Activated CD8-positive, alpha-beta T cell treated with anti-CD3 and anti-CD28 coated beads for 36 hours (primary cell): ENCODE measurements at regions of chr17 and their contacts with region 1.

Region 1: GRCh38 chr17:28547623-28548416 is 4.6 kb downstream of the UNC119 start:
- DNase-seq: peak; percentile 82
- ATAC-seq: peak; percentile 57
- H3K4me3 Mint-ChIP-seq: no peak overlapping the region
- H3K27ac Mint-ChIP-seq: peak overlapping the region; percentile 81
- H3K4me1 Mint-ChIP-seq: peaks cover 46% of the 10 kb centered on the region
- H3K27me3 Mint-ChIP-seq: no peaks in the 10 kb centered on the region
- CTCF ChIP-seq: peak; percentile 93

Region 2: GRCh38 chr17:28416703-28417311 is 131.0 kb before region 1 on chr17:
- CTCF ChIA-PET with region 1: interaction called, 14 read pairs
- POLR2A ChIA-PET with region 1: no interaction called
- intact Hi-C with region 1: no loop called
- DNase-seq: peak; percentile 72
- ATAC-seq: peak; percentile 97
- H3K4me3 Mint-ChIP-seq: no peak overlapping the region
- H3K27ac Mint-ChIP-seq: no peak overlapping the region
- H3K4me1 Mint-ChIP-seq: peaks cover 2% of the 10 kb centered on the region
- H3K27me3 Mint-ChIP-seq: peaks cover 4% of the 10 kb centered on the region
- CTCF ChIP-seq: peak; percentile 76

Region 3: GRCh38 chr17:28494445-28495188 is 53.2 kb before region 1 on chr17:
- CTCF ChIA-PET with region 1: interaction called, 11 read pairs
- POLR2A ChIA-PET with region 1: no interaction called
- intact Hi-C with region 1: no loop called
- DNase-seq: peak; percentile 84
- ATAC-seq: peak; percentile 96
- H3K4me3 Mint-ChIP-seq: no peak overlapping the region
- H3K27ac Mint-ChIP-seq: no peak overlapping the region
- H3K4me1 Mint-ChIP-seq: no peaks in the 10 kb centered on the region
- H3K27me3 Mint-ChIP-seq: peaks cover 2% of the 10 kb centered on the region
- CTCF ChIP-seq: peak; percentile 83

Region 4: GRCh38 chr17:28571255-28572122 is 23.7 kb after region 1 on chr17 and contains the start of gene PIGS:
- CTCF ChIA-PET with region 1: interaction called, 31 read pairs
- POLR2A ChIA-PET with region 1: interaction called, 5 read pairs
- intact Hi-C with region 1: no loop called
- DNase-seq: peak; percentile 95
- ATAC-seq: peak; percentile 98
- H3K4me3 Mint-ChIP-seq: peak within 1 kb of the TSS; percentile 89
- H3K27ac Mint-ChIP-seq: peak within 1 kb of the TSS; percentile 93
- H3K4me1 Mint-ChIP-seq: peaks cover 48% of the 10 kb centered on the region
- H3K27me3 Mint-ChIP-seq: no peaks in the 10 kb centered on the region
- CTCF ChIP-seq: no peak
- total RNA-seq, gene PIGS: 33.8 to 36.9 TPM

Region 5: GRCh38 chr17:28576758-28577465 is 29.1 kb after region 1 on chr17 and contains the start of gene ALDOC:
- CTCF ChIA-PET with region 1: interaction called, 31 read pairs
- POLR2A ChIA-PET with region 1: interaction called, 5 read pairs
- intact Hi-C with region 1: no loop called
- DNase-seq: peak; percentile 99
- ATAC-seq: peak; percentile 98
- H3K4me3 Mint-ChIP-seq: peak within 1 kb of the TSS; percentile 81
- H3K27ac Mint-ChIP-seq: peak within 1 kb of the TSS; percentile 93
- H3K4me1 Mint-ChIP-seq: peaks cover 47% of the 10 kb centered on the region
- H3K27me3 Mint-ChIP-seq: no peaks in the 10 kb centered on the region
- CTCF ChIP-seq: no peak
- total RNA-seq, gene ALDOC: 142 to 146 TPM

Region 6: GRCh38 chr17:28612936-28613872 is 65.4 kb after region 1 on chr17:
- CTCF ChIA-PET with region 1: interaction called, 18 read pairs
- POLR2A ChIA-PET with region 1: no interaction called
- intact Hi-C with region 1: no loop called
- DNase-seq: peak; percentile 55
- ATAC-seq: peak; percentile 64
- H3K4me3 Mint-ChIP-seq: no peak overlapping the region
- H3K27ac Mint-ChIP-seq: no peak overlapping the region
- H3K4me1 Mint-ChIP-seq: no peaks in the 10 kb centered on the region
- H3K27me3 Mint-ChIP-seq: no peaks in the 10 kb centered on the region
- CTCF ChIP-seq: peak; percentile 80

Region 7: GRCh38 chr17:28750178-28751047 is 202.6 kb after region 1 on chr17:
- CTCF ChIA-PET with region 1: no interaction called
- POLR2A ChIA-PET with region 1: no interaction called
- intact Hi-C with region 1: no loop called
- DNase-seq: peak; percentile 98
- ATAC-seq: peak; percentile 93
- H3K4me3 Mint-ChIP-seq: no peak overlapping the region
- H3K27ac Mint-ChIP-seq: peak overlapping the region; percentile 38
- H3K4me1 Mint-ChIP-seq: peaks cover 46% of the 10 kb centered on the region
- H3K27me3 Mint-ChIP-seq: no peaks in the 10 kb centered on the region
- CTCF ChIP-seq: peak; percentile 100